Tibial artery (tissue), 4 donors: ENCODE measurements at regions of chr10 and their contacts with region 1.

Region 1: GRCh38 chr10:23067939-23068775 is 27.2 kb upstream of the MSRB2 start:
- DNase-seq: peak; percentile 77 to 80
- H3K4me3 ChIP-seq: no peak overlapping the region
- H3K27ac ChIP-seq: no peak overlapping the region
- H3K4me1 ChIP-seq: peaks cover 0 to 17% (median 14%) of the 10 kb centered on the region in 4 donors
- H3K27me3 ChIP-seq: no peaks in the 10 kb centered on the region
- CTCF ChIP-seq: peak; percentile 64 to 86

Region 2: DNA sequence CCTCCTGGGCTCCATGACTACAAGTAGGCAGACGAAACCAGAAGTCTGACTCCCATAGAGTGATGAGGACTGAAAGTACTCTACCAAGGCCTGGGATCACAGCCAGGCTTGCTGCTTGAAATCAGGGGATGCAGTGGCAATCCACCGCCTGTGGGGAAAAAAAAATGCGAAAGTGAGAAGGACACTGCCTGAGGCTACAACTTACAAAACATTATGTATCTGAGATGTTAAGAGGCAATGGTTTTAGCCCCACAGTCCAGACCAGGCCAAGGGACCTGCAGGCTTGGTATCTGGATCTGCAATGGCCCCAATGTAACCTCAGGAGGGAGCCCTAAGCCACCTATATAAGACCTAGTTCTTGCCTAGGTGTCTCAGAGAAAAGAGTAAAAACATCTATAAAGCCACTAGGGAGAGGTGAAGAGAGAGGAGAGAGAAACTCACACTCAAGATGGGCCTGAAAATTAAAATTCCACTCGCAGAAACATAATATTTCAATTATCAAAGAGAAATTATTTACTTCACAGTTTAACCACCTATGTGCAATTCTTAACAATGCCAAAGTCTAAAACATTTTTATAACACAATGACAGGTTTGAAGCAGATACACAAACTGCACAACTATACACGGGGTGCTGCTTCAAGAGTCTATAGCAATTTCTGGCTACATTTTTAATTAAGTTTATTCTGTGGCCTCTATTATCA is 1078.6 kb before region 1 on chr10:
- intact Hi-C with region 1: loop called (anchors 5 kb)
- DNase-seq: peak in 1 of 2 donors; percentile 33
- H3K4me3 ChIP-seq: no peak overlapping the region
- H3K27ac ChIP-seq: no peak overlapping the region
- H3K4me1 ChIP-seq: no peaks in the 10 kb centered on the region
- H3K27me3 ChIP-seq: no peaks in the 10 kb centered on the region
- CTCF ChIP-seq: peak in 1 of 2 experiments; percentile 36

Region 3: GRCh38 chr10:22997102-22997501 is 71.1 kb before region 1 on chr10:
- intact Hi-C with region 1: loop called (anchors 10 kb)
- DNase-seq: no peak
- H3K4me3 ChIP-seq: no peak overlapping the region
- H3K27ac ChIP-seq: no peak overlapping the region
- H3K4me1 ChIP-seq: no peaks in the 10 kb centered on the region
- H3K27me3 ChIP-seq: peaks cover 0 to 14% of the 10 kb centered on the region in 2 donors
- CTCF ChIP-seq: no peak

Region 4: DNA sequence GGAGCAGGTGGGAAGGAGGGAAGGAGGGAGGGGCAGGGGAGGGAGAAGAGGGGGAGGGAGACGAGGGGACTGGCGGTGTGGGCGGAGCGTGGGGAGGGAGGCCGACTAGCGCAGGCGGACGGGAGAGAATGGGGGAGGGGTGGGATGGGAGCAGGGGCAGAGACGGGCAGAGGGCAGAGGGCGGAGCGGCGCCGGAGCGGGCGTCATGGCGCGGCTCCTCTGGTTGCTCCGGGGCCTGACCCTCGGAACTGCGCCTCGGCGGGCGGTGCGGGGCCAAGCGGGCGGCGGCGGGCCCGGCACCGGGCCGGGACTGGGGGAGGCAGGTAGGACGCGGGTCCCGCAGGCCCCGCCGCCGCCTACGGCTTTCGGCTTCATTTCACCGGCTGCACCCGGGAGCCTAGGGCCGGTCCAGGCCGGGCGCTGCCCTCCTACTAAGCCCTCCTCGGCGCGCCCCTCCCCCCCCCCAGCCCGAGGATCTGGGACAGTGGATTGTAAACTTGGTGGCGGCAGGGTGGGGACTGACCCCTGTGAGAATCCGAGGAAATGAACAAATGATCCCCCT is 27.3 kb after region 1 on chr10 and contains the start of gene MSRB2:
- intact Hi-C with region 1: no loop called
- DNase-seq: peak; percentile 91 to 97
- H3K4me3 ChIP-seq: peak within 1 kb of the TSS; percentile 92 to 96
- H3K27ac ChIP-seq: peak within 1 kb of the TSS; percentile 93 to 96
- H3K4me1 ChIP-seq: peaks cover 6 to 23% (median 12%) of the 10 kb centered on the region in 4 donors
- H3K27me3 ChIP-seq: no peaks in the 10 kb centered on the region
- CTCF ChIP-seq: no peak

Region 5: GRCh38 chr10:23850631-23851030 is 782.5 kb after region 1 on chr10:
- intact Hi-C with region 1: no loop called
- DNase-seq: no peak
- H3K4me3 ChIP-seq: no peak overlapping the region
- H3K27ac ChIP-seq: no peak overlapping the region
- H3K4me1 ChIP-seq: no peaks in the 10 kb centered on the region
- H3K27me3 ChIP-seq: no peaks in the 10 kb centered on the region
- CTCF ChIP-seq: no peak